GM10248 (cell line): ENCODE measurements at regions of chr4 and their contacts with region 1.

Region 1: DNA sequence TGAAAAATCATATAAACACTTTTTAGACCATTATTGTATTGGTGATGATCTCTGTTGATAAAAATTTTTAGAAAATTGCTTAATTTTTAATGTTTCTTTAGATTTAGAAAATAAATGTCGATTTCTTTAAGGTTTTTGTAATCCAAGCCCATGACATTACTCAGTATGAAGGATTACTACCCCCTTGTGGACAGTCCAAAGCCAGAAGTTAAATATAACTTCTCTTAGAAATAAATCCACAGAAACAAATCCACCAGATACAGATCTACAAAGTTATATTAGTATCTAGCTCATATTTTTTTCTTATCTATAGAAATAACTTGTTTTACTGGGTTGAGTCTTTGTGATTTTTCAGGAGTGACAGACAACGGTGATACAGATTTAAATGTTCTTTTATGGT is 18.9 kb downstream of the TIFA start:
- DNase-seq: no peak
- CTCF ChIP-seq: peak; percentile 48

Region 2: DNA sequence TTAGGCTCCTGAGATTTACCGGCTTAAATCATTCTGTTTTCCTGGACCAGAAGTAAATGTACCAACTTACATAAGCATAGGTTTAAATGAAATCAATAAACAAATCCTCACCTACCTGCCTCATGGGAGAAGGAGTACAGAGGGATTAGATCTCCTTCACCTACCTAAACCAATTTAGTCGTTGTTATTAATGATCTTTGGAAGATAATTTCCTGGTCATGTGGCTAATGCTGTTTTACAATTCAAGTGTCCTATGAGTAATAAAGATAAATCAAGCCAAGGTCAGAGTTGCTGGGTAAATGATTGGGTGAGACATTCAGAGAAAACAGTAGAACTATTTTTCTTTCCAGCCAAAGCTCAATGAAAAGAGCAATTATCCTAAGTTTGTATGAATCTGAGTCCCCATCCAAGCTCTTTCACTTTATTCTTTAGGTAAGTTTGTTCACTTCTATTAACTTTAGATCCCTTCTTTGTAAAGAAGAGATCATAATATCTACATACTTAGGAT is 544.6 kb before region 1 on chr4:
- CTCF ChIA-PET with region 1: no interaction called
- POLR2A ChIA-PET with region 1: no interaction called
- DNase-seq: no peak
- CTCF ChIP-seq: no peak

Region 3: GRCh38 chr4:112245383-112245782 is 21.4 kb before region 1 on chr4:
- CTCF ChIA-PET with region 1: interaction called, 14 read pairs
- POLR2A ChIA-PET with region 1: no interaction called
- DNase-seq: no peak
- CTCF ChIP-seq: no peak